ENCODE measurements at regions of chr1 and their contacts with region 1.

Region 1: DNA sequence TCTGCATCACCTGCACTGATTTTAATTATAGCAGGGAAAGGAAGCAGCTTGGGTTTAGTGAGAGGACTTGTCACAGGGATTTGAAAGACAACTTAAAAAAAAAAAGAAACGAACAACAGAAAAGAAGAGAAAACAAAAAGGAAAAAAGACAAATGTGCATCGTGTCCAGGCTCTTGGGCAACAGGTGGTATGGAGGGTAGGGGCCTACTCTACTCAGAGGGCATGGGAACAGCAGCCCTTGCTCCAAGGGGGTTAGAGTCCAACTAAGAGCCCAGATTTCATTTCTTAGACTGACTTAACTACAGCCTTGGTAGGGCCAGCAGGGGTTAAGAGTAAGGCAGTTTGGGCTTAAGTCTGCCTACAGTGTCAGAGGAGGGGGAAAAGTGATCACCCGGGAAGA is 15.3 kb upstream of the EXOSC10 start:
- DNase-seq: no peak
- ATAC-seq: no peak
- H3K4me3 ChIP-seq: no peak overlapping the region
- H3K27ac ChIP-seq: no peak overlapping the region
- H3K4me1 ChIP-seq: no peaks in the 10 kb centered on the region
- H3K27me3 ChIP-seq: no peaks in the 10 kb centered on the region
- CTCF ChIP-seq: no peak

Region 2: GRCh38 chr1:10909697-10910671 is 205.0 kb before region 1 on chr1:
- intact Hi-C with region 1: no loop called
- DNase-seq: peak in 1 of 2 donors; percentile 58
- ATAC-seq: peak in 6 of 8 donors; percentile 51 to 72 (median 62)
- H3K4me3 ChIP-seq: no peak overlapping the region
- H3K27ac ChIP-seq: no peak overlapping the region
- H3K4me1 ChIP-seq: peaks cover 0 to 2% (median 0%) of the 10 kb centered on the region in 9 donors
- H3K27me3 ChIP-seq: peaks cover 0 to 19% (median 17%) of the 10 kb centered on the region in 7 donors
- CTCF ChIP-seq: peak; percentile 20 to 61 (median 53)

Region 3: GRCh38 chr1:10975567-10976326 is 139.2 kb before region 1 on chr1:
- intact Hi-C with region 1: no loop called
- DNase-seq: no peak
- ATAC-seq: peak in 1 of 8 donors; percentile 31
- H3K4me3 ChIP-seq: no peak overlapping the region
- H3K27ac ChIP-seq: peak overlapping the region in 7 of 10 donors; percentile 3 to 53 (median 41)
- H3K4me1 ChIP-seq: peaks cover 5 to 20% (median 14%) of the 10 kb centered on the region in 9 donors
- H3K27me3 ChIP-seq: peaks cover 0 to 4% (median 0%) of the 10 kb centered on the region in 7 donors
- CTCF ChIP-seq: no peak

Region 4: GRCh38 chr1:11207898-11208611 is 93.1 kb after region 1 on chr1:
- intact Hi-C with region 1: loop called in 1 of 10 experiments (anchors 10 kb)
- DNase-seq: no peak
- ATAC-seq: peak in 2 of 8 donors; percentile 61 to 86
- H3K4me3 ChIP-seq: no peak overlapping the region
- H3K27ac ChIP-seq: peak overlapping the region in 2 of 10 donors; percentile 16 to 23
- H3K4me1 ChIP-seq: peaks cover 0 to 13% (median 5%) of the 10 kb centered on the region in 9 donors
- H3K27me3 ChIP-seq: no peaks in the 10 kb centered on the region
- CTCF ChIP-seq: no peak

Region 5: DNA sequence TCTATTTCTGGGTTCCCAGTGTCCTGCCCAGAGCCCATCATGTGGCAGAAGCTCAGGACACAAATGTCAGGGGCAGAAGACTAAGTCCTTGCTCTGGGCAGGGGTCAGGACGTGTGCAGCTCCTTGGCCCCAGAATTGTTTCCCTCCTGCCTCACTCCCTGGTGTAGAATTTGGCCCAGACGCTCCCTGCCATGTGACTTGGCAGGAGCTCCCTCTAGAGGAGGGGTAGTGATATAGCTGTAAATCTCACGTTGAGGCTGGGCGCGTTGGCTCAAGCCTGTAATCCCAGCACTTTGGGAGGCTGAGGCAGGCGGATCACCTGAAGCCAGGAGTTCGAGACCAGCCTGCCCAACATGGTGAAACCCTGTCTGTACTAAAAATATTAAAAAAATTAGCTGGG is 249.2 kb after region 1 on chr1:
- intact Hi-C with region 1: no loop called
- DNase-seq: no peak
- ATAC-seq: no peak
- H3K4me3 ChIP-seq: no peak overlapping the region
- H3K27ac ChIP-seq: no peak overlapping the region
- H3K4me1 ChIP-seq: no peaks in the 10 kb centered on the region
- H3K27me3 ChIP-seq: peaks cover 0 to 57% (median 30%) of the 10 kb centered on the region in 7 donors
- CTCF ChIP-seq: peak in 1 of 9 donors; percentile 31